ENCODE measurements at regions of chr22 and their contacts with region 1.

Region 1: DNA sequence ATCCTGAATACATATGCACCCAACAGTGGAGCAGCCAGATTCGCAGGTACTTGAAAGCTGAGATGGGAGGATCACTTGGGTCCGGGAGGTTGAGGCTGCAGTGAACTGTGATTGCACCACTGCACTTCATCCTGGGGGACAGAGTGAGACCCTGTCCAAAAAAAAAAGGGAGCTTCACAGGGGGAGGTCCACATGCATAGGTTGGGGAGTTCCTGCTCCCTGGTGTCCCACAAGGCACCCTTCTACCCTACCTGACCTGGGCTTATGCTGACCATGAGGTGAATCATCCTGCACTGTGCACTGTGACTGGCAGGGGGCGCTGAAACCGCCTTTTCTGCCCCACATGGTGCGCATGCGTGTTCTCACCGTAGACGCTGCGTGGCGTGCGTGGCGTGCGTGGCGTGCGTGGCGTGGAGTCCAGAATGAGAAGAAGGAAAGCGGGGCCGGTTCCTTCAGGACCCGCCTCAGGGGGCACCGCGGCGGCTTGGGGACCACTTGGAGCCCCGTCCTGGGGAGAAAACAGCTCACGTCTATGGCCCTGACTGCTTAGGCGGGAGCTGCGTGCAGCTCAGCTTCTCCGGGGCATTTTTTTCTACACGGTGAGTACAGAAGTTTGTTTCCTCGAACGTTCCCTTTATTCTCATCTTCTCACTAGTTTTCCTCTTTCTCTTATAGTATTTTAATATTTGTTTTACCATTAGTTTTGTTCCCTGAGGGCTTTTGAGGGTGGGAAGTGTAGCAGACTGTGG is 116.6 kb upstream of the GRK3 start:
- DNase-seq: peak; percentile 93
- ATAC-seq: peak; percentile 97
- H3K4me3 ChIP-seq: peak overlapping the region; percentile 72 to 95 (median 84)
- H3K4me3 Mint-ChIP-seq: peak overlapping the region; percentile 95
- H3K27ac ChIP-seq: peak overlapping the region in 1 of 2 donors; percentile 79
- H3K27ac Mint-ChIP-seq: peak overlapping the region; percentile 99
- H3K4me1 ChIP-seq: peaks cover 9 to 14% of the 10 kb centered on the region in 2 donors
- H3K4me1 Mint-ChIP-seq: peaks cover 38% of the 10 kb centered on the region
- H3K27me3 ChIP-seq: no peaks in the 10 kb centered on the region
- H3K27me3 Mint-ChIP-seq: no peaks in the 10 kb centered on the region
- CTCF ChIP-seq: peak; percentile 86

Region 2: GRCh38 chr22:25702040-25702439 is 254.2 kb after region 1 on chr22:
- CTCF ChIA-PET with region 1: interaction called, 4 read pairs
- POLR2A ChIA-PET with region 1: no interaction called
- intact Hi-C with region 1: loop called (anchors 1 kb)
- DNase-seq: peak; percentile 42
- ATAC-seq: peak; percentile 36
- H3K4me3 ChIP-seq: no peak overlapping the region
- H3K4me3 Mint-ChIP-seq: no peak overlapping the region
- H3K27ac ChIP-seq: no peak overlapping the region
- H3K27ac Mint-ChIP-seq: no peak overlapping the region
- H3K4me1 ChIP-seq: no peaks in the 10 kb centered on the region
- H3K4me1 Mint-ChIP-seq: peaks cover 7% of the 10 kb centered on the region
- H3K27me3 ChIP-seq: no peaks in the 10 kb centered on the region
- H3K27me3 Mint-ChIP-seq: no peaks in the 10 kb centered on the region
- CTCF ChIP-seq: peak; percentile 70